AG04450 (cell line): ENCODE measurements at regions of chr12 and their contacts with region 1.

Region 1: GRCh38 chr12:6195665-6196535 is 4.3 kb upstream of the CD9 start:
- DNase-seq: peak; percentile 68
- H3K4me3 ChIP-seq: no peak overlapping the region
- H3K27ac ChIP-seq: no peak overlapping the region
- H3K27me3 ChIP-seq: peaks cover 2% of the 10 kb centered on the region
- CTCF ChIP-seq: peak; percentile 93

Region 2: GRCh38 chr12:5377997-5378592 is 817.8 kb before region 1 on chr12:
- CTCF ChIA-PET with region 1: no interaction called
- POLR2A ChIA-PET with region 1: no interaction called
- DNase-seq: no peak
- H3K4me3 ChIP-seq: no peak overlapping the region
- H3K27ac ChIP-seq: no peak overlapping the region
- H3K27me3 ChIP-seq: no peaks in the 10 kb centered on the region
- CTCF ChIP-seq: no peak

Region 3: GRCh38 chr12:5988659-5989116 is 207.2 kb before region 1 on chr12:
- CTCF ChIA-PET with region 1: interaction called, 47 read pairs
- POLR2A ChIA-PET with region 1: no interaction called
- DNase-seq: peak; percentile 43
- H3K4me3 ChIP-seq: no peak overlapping the region
- H3K27ac ChIP-seq: no peak overlapping the region
- H3K27me3 ChIP-seq: peaks cover 17% of the 10 kb centered on the region
- CTCF ChIP-seq: peak; percentile 99

Region 4: GRCh38 chr12:6140651-6141447 is 55.1 kb before region 1 on chr12:
- CTCF ChIA-PET with region 1: interaction called, 10 read pairs
- POLR2A ChIA-PET with region 1: no interaction called
- DNase-seq: peak; percentile 47
- H3K4me3 ChIP-seq: no peak overlapping the region
- H3K27ac ChIP-seq: peak overlapping the region; percentile 31
- H3K27me3 ChIP-seq: no peaks in the 10 kb centered on the region
- CTCF ChIP-seq: no peak

Region 5: DNA sequence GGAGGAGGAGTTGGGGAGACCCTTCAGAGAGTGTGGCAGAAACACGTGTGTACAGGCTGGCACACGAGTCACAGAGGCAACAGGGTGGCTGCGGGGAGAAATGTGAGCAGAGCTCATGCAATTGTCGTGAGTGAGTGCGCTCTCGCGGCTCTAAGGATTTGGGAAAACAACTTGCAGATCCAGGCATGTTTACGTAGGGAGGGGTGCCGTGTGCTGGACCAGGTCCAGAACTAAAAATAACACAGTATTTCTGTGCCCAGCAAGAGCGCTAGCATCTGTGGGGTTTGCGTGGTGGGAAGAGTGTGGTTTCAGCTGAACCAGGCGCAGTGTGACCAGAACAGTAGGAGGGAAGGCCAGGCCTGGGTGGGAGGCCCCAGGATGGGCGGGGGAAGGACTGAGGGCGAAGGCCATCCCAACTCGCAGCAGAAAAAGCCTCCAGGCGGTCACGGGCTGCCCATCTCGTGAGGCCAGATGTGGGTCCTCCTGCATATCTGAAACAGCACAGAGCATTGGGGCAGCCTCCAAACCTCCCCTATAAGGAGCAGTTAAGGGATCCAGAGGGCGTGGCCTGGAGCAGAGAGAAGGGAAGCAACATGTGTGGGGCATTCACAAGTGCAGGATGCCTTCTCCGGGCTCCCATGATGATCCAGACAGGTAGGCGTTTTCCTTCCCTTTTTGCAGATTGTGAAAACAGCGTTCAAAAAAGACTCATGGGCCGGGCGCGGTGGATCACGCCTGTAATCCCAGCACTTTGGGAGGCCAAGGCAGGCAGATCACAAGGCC is 13.6 kb before region 1 on chr12:
- CTCF ChIA-PET with region 1: interaction called, 24 read pairs
- POLR2A ChIA-PET with region 1: no interaction called
- DNase-seq: no peak
- H3K4me3 ChIP-seq: no peak overlapping the region
- H3K27ac ChIP-seq: peak overlapping the region; percentile 80
- H3K27me3 ChIP-seq: no peaks in the 10 kb centered on the region
- CTCF ChIP-seq: no peak

Region 6: DNA sequence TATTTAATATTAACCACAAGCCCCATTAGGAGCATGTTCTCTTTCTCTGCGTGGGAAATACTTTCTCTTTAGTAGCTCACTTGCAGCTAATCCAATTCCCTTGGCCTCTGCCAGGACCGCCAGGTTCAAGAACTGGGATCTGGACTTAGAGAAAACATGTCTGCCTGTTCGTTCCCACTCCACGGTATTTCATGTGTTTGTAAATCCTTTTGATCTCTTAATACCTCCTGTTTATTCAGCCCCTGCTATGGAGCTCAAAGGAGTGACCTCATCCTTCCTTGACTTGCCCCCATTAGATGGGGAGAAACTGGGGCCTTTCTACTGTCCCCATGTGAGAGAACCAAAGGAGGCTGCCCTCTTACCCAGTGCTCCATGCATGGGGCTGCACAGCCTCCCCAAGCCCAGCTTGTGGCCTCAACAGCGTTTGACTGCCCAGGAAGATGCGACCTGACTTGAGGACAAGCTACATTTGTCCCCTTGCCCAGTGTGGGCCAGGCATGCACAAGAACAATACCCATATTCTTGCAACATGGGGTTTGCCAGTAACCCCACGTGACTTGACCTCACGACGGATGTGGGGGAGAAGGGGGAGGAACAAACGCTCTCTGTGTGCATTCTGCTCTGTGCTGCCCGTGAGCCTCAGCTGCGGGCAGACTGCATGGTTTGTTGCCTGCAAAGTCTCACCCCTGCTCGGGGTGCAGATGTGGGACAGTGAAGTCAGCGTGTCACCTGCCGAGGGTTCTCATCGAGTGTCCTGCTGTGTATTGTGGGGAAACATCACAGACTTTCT is 34.6 kb after region 1 on chr12:
- CTCF ChIA-PET with region 1: interaction called, 18 read pairs
- POLR2A ChIA-PET with region 1: no interaction called
- DNase-seq: no peak
- H3K4me3 ChIP-seq: peak overlapping the region; percentile 17
- H3K27ac ChIP-seq: peak overlapping the region; percentile 94
- H3K27me3 ChIP-seq: no peaks in the 10 kb centered on the region
- CTCF ChIP-seq: no peak

Region 7: GRCh38 chr12:6257007-6257406 is 61.1 kb after region 1 on chr12:
- CTCF ChIA-PET with region 1: no interaction called
- POLR2A ChIA-PET with region 1: no interaction called
- DNase-seq: no peak
- H3K4me3 ChIP-seq: no peak overlapping the region
- H3K27ac ChIP-seq: no peak overlapping the region
- H3K27me3 ChIP-seq: peaks cover 10% of the 10 kb centered on the region
- CTCF ChIP-seq: no peak

Region 8: DNA sequence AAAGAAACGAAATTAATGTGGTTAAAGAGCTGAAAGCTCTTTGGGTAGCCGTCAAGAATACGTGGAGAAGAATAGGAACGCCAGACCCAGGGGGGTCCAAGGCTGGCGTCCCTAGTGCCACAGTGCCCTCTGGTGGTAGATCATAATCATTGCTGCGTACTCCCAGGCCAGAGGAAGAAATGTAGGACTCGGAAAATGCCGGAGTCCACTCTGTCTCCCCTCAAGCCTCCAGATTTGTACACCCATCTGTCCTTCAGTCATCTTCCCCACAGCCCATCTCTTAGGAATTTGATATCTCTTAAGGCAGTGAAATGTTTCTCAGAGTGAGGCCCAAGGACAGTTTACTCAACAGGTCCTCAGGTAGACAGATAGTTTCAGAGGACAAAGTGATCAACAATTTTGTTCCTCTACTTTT is 89.2 kb after region 1 on chr12:
- CTCF ChIA-PET with region 1: interaction called, 185 read pairs
- POLR2A ChIA-PET with region 1: interaction called, 4 read pairs
- DNase-seq: no peak
- H3K4me3 ChIP-seq: no peak overlapping the region
- H3K27ac ChIP-seq: peak overlapping the region; percentile 52
- H3K27me3 ChIP-seq: no peaks in the 10 kb centered on the region
- CTCF ChIP-seq: peak; percentile 91